ENCODE measurements at regions of chr16 and their contacts with region 1.

Region 1: GRCh38 chr16:61644736-61645135 is 391.5 kb downstream of the CDH8 start:
- DNase-seq: no peak
- ATAC-seq: no peak
- H3K4me3 ChIP-seq: no peak overlapping the region
- H3K27ac ChIP-seq: no peak overlapping the region
- H3K4me1 ChIP-seq: no peaks in the 10 kb centered on the region
- H3K27me3 ChIP-seq: no peaks in the 10 kb centered on the region
- CTCF ChIP-seq: no peak

Region 2: DNA sequence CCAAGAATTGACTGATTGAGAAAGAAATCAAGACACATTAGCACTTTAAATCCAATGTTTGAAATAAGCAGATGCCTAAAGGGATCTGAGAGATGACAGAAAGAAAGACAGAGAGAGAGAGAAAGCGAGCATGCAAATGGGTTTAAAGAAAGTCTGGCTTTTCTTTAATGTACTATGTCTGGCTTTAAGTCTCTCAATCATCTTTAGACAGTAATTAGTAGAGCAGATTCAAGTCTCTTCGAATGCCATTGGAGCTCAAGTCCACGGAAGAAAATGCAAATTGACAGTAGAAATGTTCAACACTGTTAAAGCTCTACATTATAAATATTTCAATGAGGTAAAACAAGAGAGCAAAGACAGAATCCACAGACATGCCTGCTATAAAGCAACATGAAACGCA is 1871.7 kb after region 1 on chr16:
- intact Hi-C with region 1: loop called in 1 of 10 experiments (anchors 5 kb)
- DNase-seq: no peak
- ATAC-seq: no peak
- H3K4me3 ChIP-seq: no peak overlapping the region
- H3K27ac ChIP-seq: no peak overlapping the region
- H3K4me1 ChIP-seq: no peaks in the 10 kb centered on the region
- H3K27me3 ChIP-seq: no peaks in the 10 kb centered on the region
- CTCF ChIP-seq: no peak